ENCODE measurements at regions of chr11 and their contacts with region 1.

Region 1: GRCh38 chr11:128522055-128522942 is 65.1 kb downstream of the ETS1 start:
- DNase-seq: peak; percentile 99
- H3K4me3 ChIP-seq: peak overlapping the region; percentile 85 to 95 (median 87)
- H3K27ac ChIP-seq: peak overlapping the region; percentile 96
- H3K4me1 ChIP-seq: peaks cover 55% of the 10 kb centered on the region
- H3K27me3 ChIP-seq: no peaks in the 10 kb centered on the region
- CTCF ChIP-seq: no peak

Region 2: DNA sequence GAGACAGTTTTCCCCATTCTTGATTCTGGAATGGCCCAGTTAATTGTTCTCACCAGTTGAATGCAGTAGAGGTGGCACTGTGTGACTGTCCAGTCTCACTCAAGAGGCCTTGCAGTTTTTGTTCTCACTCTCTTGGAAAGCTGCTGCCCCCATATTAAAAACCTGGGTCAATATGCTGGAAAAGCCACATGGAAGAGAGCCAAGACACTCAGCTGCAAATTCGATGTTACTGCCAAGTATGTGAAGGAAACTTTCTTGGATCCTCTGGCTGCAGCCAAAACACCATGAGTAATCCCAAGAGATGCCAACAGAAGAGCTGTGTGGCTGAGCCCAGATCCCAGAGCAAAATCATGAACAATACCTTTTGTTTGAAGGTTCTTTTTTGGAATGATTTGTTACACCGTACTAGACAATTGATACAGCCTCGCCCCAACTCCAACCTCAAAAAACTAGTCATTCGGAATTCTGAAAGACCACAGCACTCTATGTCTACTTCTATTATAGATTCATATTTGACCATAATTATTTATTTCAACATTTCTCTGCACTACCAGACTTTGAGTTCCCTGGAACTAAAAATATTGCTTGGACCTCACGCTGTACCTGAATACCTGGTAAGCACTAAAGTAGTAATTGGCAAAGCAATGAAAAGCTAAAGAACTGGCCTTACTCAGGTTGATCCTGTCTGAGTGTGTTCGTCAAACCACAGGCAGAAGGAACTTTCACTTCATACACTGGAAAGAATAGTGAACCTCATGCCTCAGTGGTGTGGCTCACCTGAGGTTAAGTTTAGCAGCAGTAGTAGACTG is 313.8 kb before region 1 on chr11:
- CTCF ChIA-PET with region 1: no interaction called
- dilution Hi-C with region 1: no loop called
- in situ Hi-C with region 1: no loop called
- intact Hi-C with region 1: loop called (anchors 1 kb)
- DNase-seq: peak; percentile 94
- H3K4me3 ChIP-seq: peak overlapping the region in 1 of 3 experiments; percentile 1
- H3K27ac ChIP-seq: peak overlapping the region; percentile 94
- H3K4me1 ChIP-seq: peaks cover 57% of the 10 kb centered on the region
- H3K27me3 ChIP-seq: no peaks in the 10 kb centered on the region
- CTCF ChIP-seq: no peak

Region 3: DNA sequence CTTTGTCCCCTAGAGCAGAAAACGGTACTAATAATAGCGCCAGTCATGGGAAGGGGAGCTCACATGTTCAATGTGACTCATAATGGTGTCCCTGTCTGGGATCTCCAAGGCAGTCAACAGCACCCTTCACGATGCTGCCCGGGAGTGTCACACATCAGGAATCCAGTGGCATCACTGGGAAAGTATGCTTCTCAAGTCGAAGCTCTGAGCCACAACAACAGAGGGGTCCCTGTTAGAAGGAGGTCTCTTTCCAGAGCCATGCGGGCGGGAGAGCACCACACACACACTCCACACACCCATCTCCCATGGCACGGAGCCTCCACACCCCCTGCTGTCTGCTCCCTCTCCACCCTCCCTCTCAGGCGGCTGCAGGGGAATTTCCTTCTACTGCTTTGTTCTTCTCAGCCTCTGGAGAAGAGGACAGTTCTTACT is 54.7 kb before region 1 on chr11:
- CTCF ChIA-PET with region 1: no interaction called
- dilution Hi-C with region 1: no loop called
- in situ Hi-C with region 1: no loop called
- intact Hi-C with region 1: loop called (anchors 5 kb)
- DNase-seq: peak; percentile 93
- H3K4me3 ChIP-seq: no peak overlapping the region
- H3K27ac ChIP-seq: peak overlapping the region; percentile 59
- H3K4me1 ChIP-seq: peaks cover 26% of the 10 kb centered on the region
- H3K27me3 ChIP-seq: no peaks in the 10 kb centered on the region
- CTCF ChIP-seq: peak in 1 of 2 donors; percentile 30

Region 4: GRCh38 chr11:128552783-128553661 is 30.7 kb after region 1 on chr11:
- CTCF ChIA-PET with region 1: no interaction called
- dilution Hi-C with region 1: no loop called
- in situ Hi-C with region 1: no loop called
- intact Hi-C with region 1: loop called (anchors 2 kb)
- DNase-seq: peak; percentile 94
- H3K4me3 ChIP-seq: peak overlapping the region in 1 of 3 experiments; percentile 3
- H3K27ac ChIP-seq: peak overlapping the region; percentile 31
- H3K4me1 ChIP-seq: peaks cover 18% of the 10 kb centered on the region
- H3K27me3 ChIP-seq: no peaks in the 10 kb centered on the region
- CTCF ChIP-seq: no peak

Region 5: GRCh38 chr11:128630367-128631230 is 108.3 kb after region 1 on chr11:
- CTCF ChIA-PET with region 1: no interaction called
- dilution Hi-C with region 1: no loop called
- in situ Hi-C with region 1: no loop called
- intact Hi-C with region 1: loop called (anchors 1 kb)
- DNase-seq: peak; percentile 60
- H3K4me3 ChIP-seq: no peak overlapping the region
- H3K27ac ChIP-seq: no peak overlapping the region
- H3K4me1 ChIP-seq: no peaks in the 10 kb centered on the region
- H3K27me3 ChIP-seq: no peaks in the 10 kb centered on the region
- CTCF ChIP-seq: peak; percentile 80 to 85

Measured in mammary epithelial cell (primary cell).